SK-N-SH (cell line): ENCODE measurements at regions of chr14 and their contacts with region 1.

Region 1: GRCh38 chr14:104224506-104225277 is 86.3 kb downstream of the KIF26A start:
- DNase-seq: peak; percentile 67
- H3K4me3 ChIP-seq: peak overlapping the region in 1 of 2 experiments; percentile 24; a peak in 1 of 4 replicates
- H3K27ac ChIP-seq: peak overlapping the region in 1 of 2 experiments; percentile 100; a peak in 2 of 4 replicates
- H3K4me1 ChIP-seq: peaks cover 0 to 66% of the 10 kb centered on the region in 2 experiments; a peak in 2 of 4 replicates
- H3K27me3 ChIP-seq: no peaks in the 10 kb centered on the region
- CTCF ChIP-seq: peak; percentile 55
- EP300 ChIP-seq: no peak
- RAD21 ChIP-seq: no peak; the same call in 1 of the 2 replicates

Region 2: DNA sequence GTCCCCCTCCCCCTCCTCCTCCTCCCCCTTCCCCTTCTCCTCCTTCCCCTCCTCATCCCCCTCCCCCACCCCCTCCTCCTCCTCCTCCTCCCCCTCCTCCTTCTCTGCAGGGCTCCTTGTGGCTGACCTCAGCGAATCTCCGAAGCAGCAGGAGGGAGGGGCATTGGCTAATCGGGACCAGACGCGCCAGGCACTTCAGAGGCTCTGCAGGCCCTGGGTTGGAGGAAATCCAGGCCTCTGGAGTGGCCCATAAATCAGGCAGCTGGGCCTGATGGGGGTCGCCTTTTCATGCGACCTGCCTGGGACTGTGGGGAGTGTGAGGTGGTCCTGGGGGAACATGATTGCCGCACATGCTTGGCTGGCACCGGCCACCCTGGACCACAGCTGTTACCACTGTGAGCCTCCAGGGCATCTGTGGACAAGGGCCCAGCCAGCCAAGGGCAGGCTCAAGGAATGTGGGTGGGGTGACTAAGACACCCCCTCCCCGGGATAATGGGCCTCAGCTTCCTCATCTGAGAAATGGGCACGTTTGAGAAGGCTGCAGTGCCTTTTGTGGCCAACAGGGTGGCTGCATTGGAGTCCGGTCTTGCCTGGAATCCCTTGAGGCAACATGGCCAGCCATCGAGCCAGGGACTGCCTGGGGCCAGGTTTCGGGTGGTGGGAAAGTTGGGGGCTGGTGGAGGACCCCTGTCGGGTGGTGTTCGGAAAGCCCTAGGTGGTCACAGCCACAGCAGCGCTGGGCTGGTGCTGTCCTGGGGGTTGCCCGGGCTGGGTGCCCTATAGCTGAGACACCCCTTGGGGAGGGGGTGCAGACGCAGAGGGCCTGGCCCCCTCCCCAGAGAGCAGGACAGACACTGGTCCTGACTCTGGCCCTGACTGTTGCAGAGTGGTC is 74.3 kb before region 1 on chr14:
- CTCF ChIA-PET with region 1: interaction called, 48 read pairs
- POLR2A ChIA-PET with region 1: interaction called, 3 read pairs
- DNase-seq: peak; percentile 89
- H3K4me3 ChIP-seq: no peak overlapping the region; a peak in 1 of 4 replicates
- H3K27ac ChIP-seq: peak overlapping the region; percentile 47 to 99; a peak in 3 of 4 replicates
- H3K4me1 ChIP-seq: peaks cover 16 to 94% of the 10 kb centered on the region in 2 experiments; a peak in 2 of 4 replicates
- H3K27me3 ChIP-seq: no peaks in the 10 kb centered on the region
- CTCF ChIP-seq: peak; percentile 50
- EP300 ChIP-seq: peak; percentile 32 to 93; a peak in 3 of 4 replicates
- RAD21 ChIP-seq: no peak

Region 3: DNA sequence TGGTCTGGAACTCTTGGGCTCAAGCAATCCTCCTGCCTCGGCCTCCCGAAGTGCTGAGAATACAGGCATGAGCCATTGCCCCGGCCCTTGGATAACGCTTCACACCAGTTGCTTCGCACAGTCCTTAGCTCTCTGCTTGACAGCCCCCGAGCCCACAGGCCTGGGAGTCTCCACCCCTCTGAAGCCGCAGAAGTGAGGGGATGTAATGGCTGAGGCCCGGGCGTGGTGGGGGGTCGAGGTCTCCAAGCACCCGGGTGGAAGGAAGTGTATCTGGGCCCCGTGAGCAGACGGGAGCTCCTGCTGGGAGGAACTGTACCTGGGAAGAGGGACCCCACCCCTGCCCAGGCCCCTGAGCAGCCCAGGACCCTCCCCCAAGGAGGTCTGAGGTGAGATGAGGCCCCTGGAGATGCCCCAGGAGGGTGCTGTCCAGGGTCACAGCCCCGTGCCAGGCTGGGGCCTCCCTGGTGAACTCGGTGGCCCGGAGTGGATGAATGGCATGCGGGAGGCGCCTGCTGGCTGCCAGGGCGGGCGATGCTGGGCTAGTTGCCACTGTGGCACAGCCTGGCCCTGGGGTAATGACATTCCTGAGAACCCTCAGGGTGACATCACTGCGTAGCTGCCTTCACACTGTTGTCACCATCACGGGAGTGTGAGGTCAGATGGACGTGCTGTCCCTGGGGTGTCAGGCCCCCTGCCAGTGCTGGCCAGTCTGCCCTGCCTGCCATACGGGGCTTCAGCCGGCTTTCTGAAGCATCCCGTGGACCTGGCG is 37.4 kb before region 1 on chr14:
- CTCF ChIA-PET with region 1: interaction called, 12 read pairs
- POLR2A ChIA-PET with region 1: interaction called, 5 read pairs
- DNase-seq: no peak
- H3K4me3 ChIP-seq: no peak overlapping the region
- H3K27ac ChIP-seq: no peak overlapping the region; a peak in 1 of 4 replicates
- H3K4me1 ChIP-seq: peaks cover 0 to 34% of the 10 kb centered on the region in 2 experiments; a peak in 1 of 4 replicates
- H3K27me3 ChIP-seq: no peaks in the 10 kb centered on the region
- CTCF ChIP-seq: no peak
- EP300 ChIP-seq: no peak
- RAD21 ChIP-seq: no peak

Region 4: DNA sequence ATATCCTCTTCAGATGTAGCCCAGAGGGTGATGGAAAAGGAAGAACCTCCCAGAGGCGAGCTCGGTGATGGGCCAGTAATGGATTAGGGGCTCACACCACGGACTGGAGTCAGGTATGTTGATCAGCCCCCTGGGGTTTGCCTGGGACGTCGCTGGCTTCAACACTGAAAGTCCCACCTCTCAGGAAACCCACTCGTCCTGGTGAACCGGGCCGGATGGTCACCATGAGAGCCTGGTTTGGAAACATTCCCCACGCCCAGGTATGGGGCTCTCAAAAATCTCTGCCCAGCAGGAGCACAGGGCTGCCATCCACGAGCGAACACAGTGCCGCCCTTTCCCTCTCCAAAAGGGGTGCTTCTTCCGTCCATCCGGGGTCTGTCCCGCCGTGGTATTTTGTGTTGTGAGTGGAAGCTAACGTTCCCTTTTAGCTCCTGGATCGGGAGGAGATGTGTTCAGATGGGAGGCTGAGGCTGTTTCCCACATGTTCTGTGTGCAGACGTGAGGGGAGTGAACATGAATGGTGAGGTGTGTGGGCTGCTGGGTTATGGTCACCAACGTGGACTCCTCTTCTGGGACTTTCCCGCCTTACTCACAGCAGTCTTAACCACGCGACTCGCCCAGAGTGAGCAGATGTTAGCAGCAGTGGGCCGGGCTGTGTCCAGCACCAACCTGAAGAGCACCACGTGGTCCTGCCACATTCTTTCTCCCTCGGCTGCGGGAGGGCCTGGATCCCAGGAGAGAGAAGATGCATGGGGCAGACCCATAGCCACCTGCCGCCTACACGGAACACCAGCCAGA is 52.9 kb after region 1 on chr14:
- CTCF ChIA-PET with region 1: interaction called, 15 read pairs
- POLR2A ChIA-PET with region 1: interaction called, 6 read pairs
- DNase-seq: no peak
- H3K4me3 ChIP-seq: no peak overlapping the region
- H3K27ac ChIP-seq: no peak overlapping the region
- H3K4me1 ChIP-seq: peaks cover 0 to 43% of the 10 kb centered on the region in 2 experiments; a peak in 2 of 4 replicates
- H3K27me3 ChIP-seq: no peaks in the 10 kb centered on the region
- CTCF ChIP-seq: no peak
- EP300 ChIP-seq: no peak
- RAD21 ChIP-seq: no peak

Region 5: DNA sequence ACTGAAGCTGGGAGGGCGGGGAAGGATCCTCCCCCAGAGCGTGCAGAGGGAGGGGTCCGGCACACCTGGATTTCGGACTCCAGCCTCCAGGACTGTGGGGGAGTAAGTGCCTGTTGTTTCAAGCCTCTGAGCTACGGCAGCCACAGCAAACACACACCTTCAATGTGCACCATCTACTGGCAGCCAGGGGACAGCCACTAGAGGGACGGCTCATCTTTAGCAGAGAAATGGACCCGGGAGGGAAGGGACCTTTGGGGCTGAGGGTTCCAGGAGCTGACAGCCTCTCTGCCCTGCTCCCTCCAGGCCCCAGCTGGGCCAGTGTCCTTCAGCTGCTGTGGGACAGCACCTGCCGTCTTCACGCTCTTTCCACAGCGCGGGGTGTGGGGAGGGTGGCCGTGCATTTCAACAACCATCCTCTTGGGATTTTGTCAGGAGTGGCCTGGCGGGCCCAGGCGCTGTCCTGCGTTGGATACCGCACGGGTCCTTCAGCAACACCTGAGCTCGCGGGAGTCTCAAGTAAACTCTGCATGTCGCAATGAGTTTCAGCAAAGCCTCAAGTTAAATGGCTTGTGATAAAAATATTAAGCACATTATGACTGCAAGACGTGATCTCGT is 145.7 kb after region 1 on chr14:
- CTCF ChIA-PET with region 1: interaction called, 11 read pairs
- POLR2A ChIA-PET with region 1: no interaction called
- DNase-seq: peak; percentile 80
- H3K4me3 ChIP-seq: no peak overlapping the region
- H3K27ac ChIP-seq: no peak overlapping the region; a peak in 1 of 4 replicates
- H3K4me1 ChIP-seq: peaks cover 0 to 33% of the 10 kb centered on the region in 2 experiments; a peak in 1 of 4 replicates
- H3K27me3 ChIP-seq: no peaks in the 10 kb centered on the region
- CTCF ChIP-seq: no peak
- EP300 ChIP-seq: no peak
- RAD21 ChIP-seq: peak; percentile 79